ENCODE measurements at regions of chr5 and their contacts with region 1.

Region 1: DNA sequence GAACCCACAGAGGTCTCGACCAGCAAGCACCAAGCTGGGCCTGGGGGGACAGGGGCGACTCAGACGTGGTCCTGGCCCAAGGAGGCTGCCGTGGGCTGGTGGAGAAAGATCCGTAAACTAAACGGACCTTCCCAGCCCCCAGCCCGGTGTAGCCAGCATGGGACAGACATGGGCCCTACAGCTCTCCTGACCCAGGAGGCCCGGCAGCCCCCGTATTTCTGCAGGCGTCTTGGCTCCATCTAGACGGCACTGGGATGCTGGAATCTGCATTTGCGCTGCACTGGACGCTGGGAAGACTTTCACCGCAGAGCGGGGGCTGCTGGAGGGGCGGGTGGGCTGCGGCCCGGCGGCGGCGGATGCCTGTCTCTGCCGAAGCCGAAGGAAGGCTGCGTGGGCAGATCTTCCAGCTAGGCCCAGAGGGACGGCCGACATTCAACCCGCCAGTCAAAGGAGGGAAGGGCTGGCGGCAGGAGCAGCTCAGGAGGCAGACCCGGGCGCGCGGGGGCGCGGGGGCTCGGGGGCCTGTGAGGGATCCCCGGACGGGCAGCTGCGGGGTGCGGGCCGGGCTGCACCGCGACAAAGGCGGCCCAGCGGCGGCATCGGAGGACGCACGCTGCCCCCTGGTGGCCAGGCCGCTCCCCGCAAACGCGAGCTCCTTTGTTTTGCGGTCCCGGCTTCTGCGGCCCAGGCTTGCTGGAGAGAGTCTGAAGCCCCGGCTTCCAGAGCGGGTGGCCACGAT is 266.2 kb downstream of the NSG2 start:
- DNase-seq: peak; percentile 29
- H3K4me3 ChIP-seq: peak overlapping the region in 1 of 3 experiments; percentile 21
- H3K27ac ChIP-seq: no peak overlapping the region
- H3K4me1 ChIP-seq: no peaks in the 10 kb centered on the region
- H3K27me3 ChIP-seq: no peaks in the 10 kb centered on the region
- CTCF ChIP-seq: peak; percentile 76 to 83
- POLR2A ChIP-seq: no peak

Region 2: GRCh38 chr5:174020397-174021296 is 291.1 kb before region 1 on chr5:
- CTCF ChIA-PET with region 1: interaction called, 8 read pairs
- POLR2A ChIA-PET with region 1: no interaction called
- dilution Hi-C with region 1: no loop called
- intact Hi-C with region 1: loop called (anchors 1 kb)
- DNase-seq: peak; percentile 12
- H3K4me3 ChIP-seq: no peak overlapping the region
- H3K27ac ChIP-seq: no peak overlapping the region
- H3K4me1 ChIP-seq: no peaks in the 10 kb centered on the region
- H3K27me3 ChIP-seq: no peaks in the 10 kb centered on the region
- CTCF ChIP-seq: peak; percentile 22
- POLR2A ChIP-seq: no peak

Region 3: GRCh38 chr5:174045470-174046025 is 266.2 kb before region 1 on chr5 and contains the start of gene NSG2:
- CTCF ChIA-PET with region 1: interaction called, 3 read pairs
- POLR2A ChIA-PET with region 1: no interaction called
- dilution Hi-C with region 1: no loop called
- intact Hi-C with region 1: loop called (anchors 1 kb)
- DNase-seq: peak; percentile 24
- H3K4me3 ChIP-seq: no peak within 1 kb of the TSS
- H3K27ac ChIP-seq: no peak within 1 kb of the TSS
- H3K4me1 ChIP-seq: no peaks in the 10 kb centered on the region
- H3K27me3 ChIP-seq: no peaks in the 10 kb centered on the region
- CTCF ChIP-seq: peak in 1 of 2 donors; percentile 9
- POLR2A ChIP-seq: no peak
- total RNA-seq, gene NSG2: not detected in 2 replicates

Region 4: DNA sequence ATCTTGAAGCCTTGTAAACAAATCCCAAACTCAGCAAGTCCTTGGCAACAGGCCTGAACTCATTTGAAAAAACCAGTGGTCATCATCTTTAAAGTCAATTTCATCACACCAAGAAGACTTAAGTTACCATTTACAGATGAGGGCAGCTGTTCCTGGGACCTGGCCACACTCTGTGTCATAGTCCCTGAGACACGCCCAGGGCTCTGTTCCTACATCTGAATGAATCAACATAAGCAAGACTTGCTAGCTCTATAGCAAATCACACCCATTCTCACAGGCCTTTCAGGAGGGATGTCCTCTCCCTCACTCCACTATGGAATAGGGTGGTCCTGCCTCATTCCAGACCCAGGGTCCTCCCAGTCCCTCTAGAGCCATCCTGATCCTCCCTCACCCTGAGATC is 123.4 kb before region 1 on chr5:
- CTCF ChIA-PET with region 1: no interaction called
- POLR2A ChIA-PET with region 1: no interaction called
- dilution Hi-C with region 1: no loop called
- intact Hi-C with region 1: no loop called
- DNase-seq: no peak
- H3K4me3 ChIP-seq: no peak overlapping the region
- H3K27ac ChIP-seq: no peak overlapping the region
- H3K4me1 ChIP-seq: no peaks in the 10 kb centered on the region
- H3K27me3 ChIP-seq: no peaks in the 10 kb centered on the region
- CTCF ChIP-seq: no peak
- POLR2A ChIP-seq: no peak

Measured in endothelial cell of umbilical vein (primary cell).